ENCODE measurements at regions of chr22 and their contacts with region 1.

Region 1: GRCh38 chr22:36506637-36507517 is at the start of gene FOXRED2:
- DNase-seq: no peak
- ATAC-seq: peak; percentile 88
- H3K4me3 ChIP-seq: peak within 1 kb of the TSS; percentile 48 to 60
- H3K27ac ChIP-seq: peak within 1 kb of the TSS; percentile 80
- H3K4me1 ChIP-seq: no peaks in the 10 kb centered on the region
- H3K27me3 ChIP-seq: no peaks in the 10 kb centered on the region
- CTCF ChIP-seq: no peak
- total RNA-seq, gene FOXRED2: 37.7 TPM

Region 2: DNA sequence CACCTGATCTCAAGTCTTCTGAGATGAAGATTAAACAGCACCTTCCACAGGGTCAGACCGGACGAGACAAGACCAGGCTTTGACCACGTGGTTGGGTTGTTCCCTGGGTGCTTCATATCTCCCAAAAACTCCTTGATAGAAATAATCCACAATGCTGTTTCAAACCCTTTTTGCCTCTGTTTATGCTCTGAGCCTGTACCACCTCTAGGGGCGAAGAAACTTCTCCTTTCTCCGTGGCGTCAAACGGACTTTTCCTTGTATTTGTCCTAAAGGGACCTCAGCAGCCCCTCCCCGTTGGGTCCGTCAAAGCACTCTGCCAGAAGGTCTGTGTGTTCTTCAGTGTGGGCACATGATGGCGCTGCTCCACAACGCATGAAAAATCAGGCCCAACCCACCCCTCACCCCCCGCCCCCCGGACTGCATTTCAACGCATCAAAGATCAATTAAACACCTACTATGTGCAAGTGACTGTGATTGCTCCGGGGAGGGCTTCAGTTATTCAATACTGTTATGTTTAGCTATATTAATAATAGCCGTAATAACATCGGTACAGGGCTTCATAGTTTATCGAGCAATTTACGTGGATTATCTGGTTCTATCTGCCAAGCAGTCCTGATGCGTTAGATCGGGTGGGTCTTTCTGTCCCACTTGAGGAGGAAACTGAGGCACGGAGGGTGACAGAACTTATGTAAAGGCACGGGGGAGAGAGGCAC is 39.4 kb after region 1 on chr22:
- CTCF ChIA-PET with region 1: no interaction called
- POLR2A ChIA-PET with region 1: no interaction called
- in situ Hi-C with region 1: no loop called
- intact Hi-C with region 1: no loop called
- DNase-seq: no peak
- ATAC-seq: peak; percentile 67
- H3K4me3 ChIP-seq: peak overlapping the region; percentile 11 to 50; a peak in 3 of 4 replicates
- H3K27ac ChIP-seq: peak overlapping the region; percentile 81
- H3K4me1 ChIP-seq: peaks cover 35% of the 10 kb centered on the region
- H3K27me3 ChIP-seq: no peaks in the 10 kb centered on the region
- CTCF ChIP-seq: peak; percentile 82

Region 3: DNA sequence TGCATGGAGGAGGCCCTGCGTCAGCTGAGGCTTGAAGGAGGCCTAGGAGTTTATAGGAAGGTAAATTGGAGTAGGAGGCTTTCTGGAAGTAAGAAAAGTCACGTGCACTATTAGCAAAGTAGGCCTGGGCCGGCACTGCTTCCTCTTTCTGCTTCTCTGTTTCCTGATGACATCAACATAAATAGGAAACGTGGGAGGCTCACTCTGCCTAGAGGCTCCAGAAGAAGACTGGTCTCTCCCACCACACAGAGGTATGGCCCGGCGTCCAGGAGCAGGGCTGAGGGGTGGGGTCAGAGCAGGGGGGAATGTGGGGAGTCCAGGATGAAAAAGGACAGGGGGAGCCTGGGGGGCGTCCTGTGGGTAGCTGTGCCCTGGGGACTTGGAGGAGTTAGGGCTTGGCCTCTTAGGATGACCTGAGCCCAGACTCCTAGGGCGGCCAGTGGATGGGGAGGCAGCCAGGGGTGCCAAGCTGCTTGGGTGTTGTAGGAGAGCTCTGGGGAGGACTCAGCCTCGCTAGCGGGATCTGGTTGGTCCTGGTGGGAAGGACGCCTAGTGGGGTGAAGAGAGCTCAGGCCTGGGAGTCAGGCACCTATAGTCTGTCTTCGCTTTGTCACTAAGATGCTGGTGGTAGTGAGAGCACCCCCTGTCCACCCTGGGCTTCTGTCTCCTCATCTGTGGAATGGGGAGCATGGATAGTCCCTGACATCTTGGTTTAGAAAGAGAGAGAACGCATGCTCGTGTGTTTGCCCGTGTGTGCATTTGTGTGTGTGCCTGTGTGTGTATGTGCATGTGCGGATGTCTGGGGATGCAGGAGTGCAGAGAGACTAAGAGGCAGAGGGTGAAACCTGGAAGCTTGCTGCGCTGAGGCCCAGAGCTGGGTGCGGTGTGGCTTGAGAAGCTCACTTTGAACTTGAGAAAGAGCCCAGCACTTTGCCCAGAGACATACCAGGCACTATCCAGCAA is 406.8 kb after region 1 on chr22 and contains the start of gene CSF2RB:
- CTCF ChIA-PET with region 1: no interaction called
- POLR2A ChIA-PET with region 1: interaction called, 14 read pairs
- in situ Hi-C with region 1: no loop called
- intact Hi-C with region 1: no loop called
- DNase-seq: no peak
- ATAC-seq: no peak
- H3K4me3 ChIP-seq: no peak within 1 kb of the TSS
- H3K27ac ChIP-seq: no peak within 1 kb of the TSS
- H3K4me1 ChIP-seq: no peaks in the 10 kb centered on the region
- H3K27me3 ChIP-seq: peaks cover 2% of the 10 kb centered on the region; the same call in 1 of the 2 replicates
- CTCF ChIP-seq: no peak
- total RNA-seq, gene CSF2RB: not detected

Measured in Panc1 (cell line).